Psoas muscle (tissue), 8 donors: ENCODE measurements at regions of chrX and their contacts with region 1.

Region 1: GRCh38 chrX:49725923-49726904 is 30.4 kb upstream of the PAGE1 start:
- DNase-seq: peak; percentile 25 to 57
- ATAC-seq: peak; percentile 86 to 90 (median 88)
- H3K4me3 ChIP-seq: peak overlapping the region; percentile 66
- H3K27ac ChIP-seq: peak overlapping the region; percentile 90
- H3K4me1 ChIP-seq: no peaks in the 10 kb centered on the region
- H3K27me3 ChIP-seq: no peaks in the 10 kb centered on the region
- CTCF ChIP-seq: no peak

Region 2: GRCh38 chrX:49673394-49673793 is 52.8 kb before region 1 on chrX:
- intact Hi-C with region 1: loop called in 1 of 2 experiments (anchors 10 kb)
- DNase-seq: no peak
- ATAC-seq: no peak
- H3K4me3 ChIP-seq: no peak overlapping the region
- H3K27ac ChIP-seq: no peak overlapping the region
- H3K4me1 ChIP-seq: peaks cover 7% of the 10 kb centered on the region
- H3K27me3 ChIP-seq: no peaks in the 10 kb centered on the region
- CTCF ChIP-seq: no peak